CD8-positive, alpha-beta T cell (primary cell): ENCODE measurements at regions of chr12 and their contacts with region 1.

Region 1: DNA sequence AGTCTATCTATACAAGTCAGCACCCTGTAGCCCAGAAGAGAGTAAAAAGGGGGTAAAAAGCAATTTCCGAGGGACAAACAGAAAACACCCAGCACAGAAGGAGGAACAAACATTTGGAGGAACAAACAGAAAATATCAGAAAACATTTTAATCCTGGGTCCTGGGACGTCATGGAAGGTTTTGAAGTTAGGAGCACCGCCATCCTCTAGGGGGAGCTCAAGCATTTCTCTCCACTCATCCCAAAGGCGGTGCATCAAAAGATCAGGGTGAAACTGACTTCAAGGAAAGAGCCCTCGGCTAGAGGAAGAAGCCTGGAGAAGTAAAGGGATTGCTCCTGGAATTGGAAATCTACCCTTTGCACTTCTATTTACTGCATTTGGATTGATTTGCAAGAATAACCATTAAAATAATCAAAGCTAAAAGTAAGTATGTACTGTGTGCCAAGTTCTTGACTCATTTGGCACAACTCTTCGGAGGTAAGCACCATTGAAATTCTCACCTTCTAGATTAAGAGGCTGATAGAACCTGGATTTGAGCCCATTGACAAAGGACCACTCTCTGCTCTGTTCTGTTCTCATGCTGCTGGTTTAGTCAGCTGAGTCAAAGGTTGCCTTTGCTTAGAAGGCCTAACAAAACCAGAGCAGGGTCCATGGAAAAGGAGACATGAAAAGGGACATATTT is 17.2 kb upstream of the POC1B start:
- DNase-seq: peak; percentile 32 to 81 (median 63)
- ATAC-seq: peak; percentile 83
- H3K4me3 ChIP-seq: no peak overlapping the region
- H3K4me3 Mint-ChIP-seq: no peak overlapping the region
- H3K27ac ChIP-seq: no peak overlapping the region
- H3K27ac Mint-ChIP-seq: no peak overlapping the region
- H3K4me1 ChIP-seq: no peaks in the 10 kb centered on the region
- H3K4me1 Mint-ChIP-seq: peaks cover 4% of the 10 kb centered on the region
- H3K27me3 ChIP-seq: no peaks in the 10 kb centered on the region
- H3K27me3 Mint-ChIP-seq: peaks cover 2% of the 10 kb centered on the region
- CTCF ChIP-seq: peak; percentile 90

Region 2: GRCh38 chr12:89856431-89856830 is 313.4 kb after region 1 on chr12:
- CTCF ChIA-PET with region 1: interaction called, 3 read pairs
- POLR2A ChIA-PET with region 1: no interaction called
- intact Hi-C with region 1: loop called in 1 of 2 experiments (anchors 5 kb)
- DNase-seq: peak in 2 of 9 experiments; percentile 19 to 49
- ATAC-seq: peak; percentile 42
- H3K4me3 ChIP-seq: no peak overlapping the region
- H3K4me3 Mint-ChIP-seq: no peak overlapping the region
- H3K27ac ChIP-seq: no peak overlapping the region
- H3K27ac Mint-ChIP-seq: peak overlapping the region; percentile 29
- H3K4me1 ChIP-seq: peaks cover 11% of the 10 kb centered on the region
- H3K4me1 Mint-ChIP-seq: peaks cover 38% of the 10 kb centered on the region
- H3K27me3 ChIP-seq: no peaks in the 10 kb centered on the region
- H3K27me3 Mint-ChIP-seq: no peaks in the 10 kb centered on the region
- CTCF ChIP-seq: no peak

Region 3: GRCh38 chr12:89960607-89961394 is 417.7 kb after region 1 on chr12:
- CTCF ChIA-PET with region 1: no interaction called
- POLR2A ChIA-PET with region 1: no interaction called
- intact Hi-C with region 1: loop called in 1 of 2 experiments (anchors 2 kb)
- DNase-seq: peak in 2 of 9 experiments; percentile 13 to 15
- ATAC-seq: no peak
- H3K4me3 ChIP-seq: no peak overlapping the region
- H3K4me3 Mint-ChIP-seq: no peak overlapping the region
- H3K27ac ChIP-seq: no peak overlapping the region
- H3K27ac Mint-ChIP-seq: no peak overlapping the region
- H3K4me1 ChIP-seq: no peaks in the 10 kb centered on the region
- H3K4me1 Mint-ChIP-seq: peaks cover 2% of the 10 kb centered on the region
- H3K27me3 ChIP-seq: no peaks in the 10 kb centered on the region
- H3K27me3 Mint-ChIP-seq: no peaks in the 10 kb centered on the region
- CTCF ChIP-seq: no peak

Region 4: GRCh38 chr12:90102957-90103652 is 560.1 kb after region 1 on chr12:
- CTCF ChIA-PET with region 1: interaction called, 74 read pairs
- POLR2A ChIA-PET with region 1: no interaction called
- intact Hi-C with region 1: loop called in 1 of 2 experiments (anchors 1 kb)
- DNase-seq: peak in 3 of 9 experiments; percentile 6 to 65 (median 53)
- ATAC-seq: peak; percentile 56
- H3K4me3 ChIP-seq: no peak overlapping the region
- H3K4me3 Mint-ChIP-seq: peak overlapping the region; percentile 68
- H3K27ac ChIP-seq: no peak overlapping the region
- H3K27ac Mint-ChIP-seq: no peak overlapping the region
- H3K4me1 ChIP-seq: no peaks in the 10 kb centered on the region
- H3K4me1 Mint-ChIP-seq: peaks cover 4% of the 10 kb centered on the region
- H3K27me3 ChIP-seq: no peaks in the 10 kb centered on the region
- H3K27me3 Mint-ChIP-seq: peaks cover 2% of the 10 kb centered on the region
- CTCF ChIP-seq: peak; percentile 70

Region 5: GRCh38 chr12:90335566-90335965 is 792.5 kb after region 1 on chr12:
- CTCF ChIA-PET with region 1: interaction called, 3 read pairs
- POLR2A ChIA-PET with region 1: no interaction called
- intact Hi-C with region 1: loop called in 1 of 2 experiments (anchors 5 kb)
- DNase-seq: no peak
- ATAC-seq: no peak
- H3K4me3 ChIP-seq: no peak overlapping the region
- H3K4me3 Mint-ChIP-seq: no peak overlapping the region
- H3K27ac ChIP-seq: no peak overlapping the region
- H3K27ac Mint-ChIP-seq: no peak overlapping the region
- H3K4me1 ChIP-seq: no peaks in the 10 kb centered on the region
- H3K4me1 Mint-ChIP-seq: no peaks in the 10 kb centered on the region
- H3K27me3 ChIP-seq: no peaks in the 10 kb centered on the region
- H3K27me3 Mint-ChIP-seq: peaks cover 5% of the 10 kb centered on the region
- CTCF ChIP-seq: no peak

Region 6: DNA sequence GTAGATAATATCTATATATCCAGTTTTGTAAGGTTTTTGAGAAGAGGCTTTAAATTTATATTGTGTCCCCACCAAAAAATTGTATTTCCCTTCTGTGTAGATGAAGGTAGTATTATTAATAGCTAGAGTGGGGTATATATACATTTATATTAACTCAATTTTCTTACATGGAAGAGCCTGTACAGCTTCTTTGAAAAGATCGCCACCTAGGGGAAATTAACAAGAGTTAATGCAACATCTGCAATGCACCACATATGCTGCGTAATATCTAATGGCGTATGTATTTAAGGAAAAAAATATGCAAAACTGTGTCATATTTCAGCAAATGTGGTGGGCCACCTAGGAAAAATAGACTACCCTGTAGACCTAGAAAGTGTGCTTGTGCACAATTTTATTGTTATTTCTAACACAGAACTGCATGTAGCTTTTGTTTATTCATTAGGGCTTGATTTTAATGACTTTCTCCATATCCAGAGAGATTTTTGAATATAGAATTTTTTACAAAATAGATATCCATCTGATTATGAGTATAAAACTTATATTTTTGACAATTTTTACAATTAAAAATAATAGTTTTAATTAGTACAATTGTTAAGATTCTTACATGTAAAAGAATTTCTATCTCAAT is 1397.9 kb after region 1 on chr12:
- CTCF ChIA-PET with region 1: interaction called, 4 read pairs
- POLR2A ChIA-PET with region 1: no interaction called
- intact Hi-C with region 1: loop called (anchors 5 kb)
- DNase-seq: peak in 2 of 9 experiments; percentile 3 to 17
- ATAC-seq: no peak
- H3K4me3 ChIP-seq: no peak overlapping the region
- H3K4me3 Mint-ChIP-seq: no peak overlapping the region
- H3K27ac ChIP-seq: no peak overlapping the region
- H3K27ac Mint-ChIP-seq: no peak overlapping the region
- H3K4me1 ChIP-seq: no peaks in the 10 kb centered on the region
- H3K4me1 Mint-ChIP-seq: no peaks in the 10 kb centered on the region
- H3K27me3 ChIP-seq: no peaks in the 10 kb centered on the region
- H3K27me3 Mint-ChIP-seq: peaks cover 3% of the 10 kb centered on the region
- CTCF ChIP-seq: peak; percentile 56

Region 7: GRCh38 chr12:91355150-91356006 is 1812.3 kb after region 1 on chr12:
- CTCF ChIA-PET with region 1: no interaction called
- POLR2A ChIA-PET with region 1: no interaction called
- intact Hi-C with region 1: loop called in 1 of 2 experiments (anchors 10 kb)
- DNase-seq: peak in 8 of 9 experiments; percentile 4 to 63 (median 38)
- ATAC-seq: peak; percentile 82
- H3K4me3 ChIP-seq: no peak overlapping the region
- H3K4me3 Mint-ChIP-seq: no peak overlapping the region
- H3K27ac ChIP-seq: no peak overlapping the region
- H3K27ac Mint-ChIP-seq: no peak overlapping the region
- H3K4me1 ChIP-seq: no peaks in the 10 kb centered on the region
- H3K4me1 Mint-ChIP-seq: no peaks in the 10 kb centered on the region
- H3K27me3 ChIP-seq: no peaks in the 10 kb centered on the region
- H3K27me3 Mint-ChIP-seq: peaks cover 15% of the 10 kb centered on the region
- CTCF ChIP-seq: peak; percentile 58